Activated B cell treated with CpG ODN at 0.5 μM for 24 hours (primary cell): ENCODE measurements at regions of chr1 and their contacts with region 1.

Region 1: DNA sequence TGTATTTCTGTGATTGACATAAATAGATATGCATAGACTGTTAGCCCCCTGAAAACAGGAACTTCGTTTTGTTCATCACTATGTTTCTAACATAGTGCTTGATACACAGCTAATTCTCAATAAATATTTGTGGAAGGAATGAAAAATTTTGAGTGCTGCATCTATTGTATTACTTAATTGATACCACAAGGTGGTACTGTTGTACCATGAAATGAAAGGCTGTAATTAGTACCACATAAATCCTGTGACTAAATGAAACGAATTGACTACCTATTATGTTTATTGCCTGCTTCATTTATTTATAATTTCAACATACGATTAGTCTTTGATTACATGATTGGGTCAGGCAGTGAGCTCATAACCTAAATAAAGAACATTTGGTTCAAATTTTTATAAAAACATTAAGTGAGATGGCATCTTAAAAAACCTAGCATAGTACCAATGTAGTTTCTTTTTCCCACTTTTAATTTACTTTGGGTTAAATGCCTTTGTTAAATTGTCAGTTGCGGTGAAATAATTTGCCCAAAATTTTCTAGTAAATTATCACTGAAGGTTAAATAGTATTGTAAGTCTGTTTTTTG is 15.0 kb upstream of the TGFB2 start:
- DNase-seq: no peak
- ATAC-seq: peak; percentile 70
- H3K4me3 Mint-ChIP-seq: no peak overlapping the region
- H3K27ac Mint-ChIP-seq: no peak overlapping the region
- H3K4me1 Mint-ChIP-seq: no peaks in the 10 kb centered on the region
- H3K27me3 Mint-ChIP-seq: no peaks in the 10 kb centered on the region
- CTCF ChIP-seq: peak; percentile 65

Region 2: DNA sequence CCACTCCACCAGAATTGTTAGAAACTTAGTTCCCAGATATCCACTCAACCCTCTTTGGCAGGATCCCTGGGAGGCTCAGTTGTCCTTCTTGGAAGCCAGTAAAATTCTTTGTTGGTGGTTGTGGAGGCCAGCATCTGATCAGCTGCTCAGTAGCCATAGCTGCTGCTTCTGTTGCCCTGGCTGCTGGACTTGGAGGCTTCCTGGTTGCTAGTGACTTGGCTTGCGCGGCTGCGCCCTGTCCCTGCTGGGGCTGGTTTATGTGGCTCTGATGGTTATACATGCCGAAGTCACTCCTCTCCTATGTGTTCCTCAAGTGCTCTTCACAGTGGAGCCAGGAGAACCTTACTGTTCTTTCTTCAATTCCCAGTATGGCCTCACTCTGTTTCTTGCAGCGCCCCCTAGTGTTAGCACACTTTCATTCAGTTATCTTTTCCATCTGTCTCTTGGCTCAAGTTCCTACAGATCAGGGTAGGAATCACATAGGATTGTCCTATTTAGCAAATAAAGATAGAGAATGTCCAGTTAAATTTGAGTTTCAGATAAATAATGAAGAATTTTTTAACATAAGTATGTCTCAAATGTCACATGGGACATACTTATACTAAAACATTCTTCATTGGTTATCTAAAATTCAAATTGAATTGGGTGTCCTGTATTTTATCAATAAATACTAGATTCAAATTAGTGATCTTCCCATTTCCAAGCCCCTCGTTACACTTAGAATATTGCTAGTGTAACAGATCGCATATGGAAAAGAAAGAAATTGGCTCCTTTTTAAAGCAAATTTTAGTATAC is 191.4 kb after region 1 on chr1:
- CTCF ChIA-PET with region 1: no interaction called
- POLR2A ChIA-PET with region 1: no interaction called
- intact Hi-C with region 1: loop called (anchors 1 kb)
- DNase-seq: no peak
- ATAC-seq: no peak
- H3K4me3 Mint-ChIP-seq: no peak overlapping the region
- H3K27ac Mint-ChIP-seq: no peak overlapping the region
- H3K4me1 Mint-ChIP-seq: no peaks in the 10 kb centered on the region
- H3K27me3 Mint-ChIP-seq: peaks cover 8% of the 10 kb centered on the region
- CTCF ChIP-seq: no peak

Region 3: DNA sequence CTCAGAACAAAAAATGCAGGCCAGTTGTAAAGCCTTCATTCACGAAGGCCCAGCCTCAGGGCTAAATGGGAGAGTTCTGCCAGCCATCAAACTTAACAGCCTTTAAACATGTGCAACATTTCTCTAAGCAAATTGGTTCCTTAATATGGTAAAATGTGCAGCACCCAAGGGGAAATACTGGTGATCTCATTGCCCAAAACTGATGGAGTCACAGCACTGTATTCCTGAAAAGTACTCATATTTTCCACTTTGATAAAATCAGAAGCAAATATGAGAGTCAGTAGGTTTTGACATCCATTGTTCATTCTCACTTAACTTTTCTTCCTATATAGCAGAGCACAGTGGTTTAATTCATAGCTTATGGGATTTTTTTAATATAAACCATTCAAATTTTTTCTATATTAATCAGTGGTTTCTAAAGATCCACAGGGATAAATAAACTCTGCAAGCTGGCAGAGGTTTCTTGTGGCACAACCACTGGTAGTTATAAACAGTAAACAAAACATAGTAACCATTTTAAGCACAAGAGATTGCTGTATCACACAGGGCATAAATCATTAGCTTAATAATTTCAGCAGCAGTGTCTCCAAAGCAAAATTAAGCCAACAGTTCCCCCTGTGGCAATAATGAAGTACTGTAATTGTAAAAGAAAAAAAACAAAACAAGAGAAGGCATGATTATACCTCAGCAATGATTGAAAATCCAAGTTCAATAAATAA is 736.7 kb after region 1 on chr1:
- CTCF ChIA-PET with region 1: no interaction called
- POLR2A ChIA-PET with region 1: no interaction called
- intact Hi-C with region 1: loop called (anchors 2 kb)
- DNase-seq: no peak
- ATAC-seq: no peak
- H3K4me3 Mint-ChIP-seq: no peak overlapping the region
- H3K27ac Mint-ChIP-seq: no peak overlapping the region
- H3K4me1 Mint-ChIP-seq: peaks cover 8% of the 10 kb centered on the region
- H3K27me3 Mint-ChIP-seq: no peaks in the 10 kb centered on the region
- CTCF ChIP-seq: no peak

Region 4: DNA sequence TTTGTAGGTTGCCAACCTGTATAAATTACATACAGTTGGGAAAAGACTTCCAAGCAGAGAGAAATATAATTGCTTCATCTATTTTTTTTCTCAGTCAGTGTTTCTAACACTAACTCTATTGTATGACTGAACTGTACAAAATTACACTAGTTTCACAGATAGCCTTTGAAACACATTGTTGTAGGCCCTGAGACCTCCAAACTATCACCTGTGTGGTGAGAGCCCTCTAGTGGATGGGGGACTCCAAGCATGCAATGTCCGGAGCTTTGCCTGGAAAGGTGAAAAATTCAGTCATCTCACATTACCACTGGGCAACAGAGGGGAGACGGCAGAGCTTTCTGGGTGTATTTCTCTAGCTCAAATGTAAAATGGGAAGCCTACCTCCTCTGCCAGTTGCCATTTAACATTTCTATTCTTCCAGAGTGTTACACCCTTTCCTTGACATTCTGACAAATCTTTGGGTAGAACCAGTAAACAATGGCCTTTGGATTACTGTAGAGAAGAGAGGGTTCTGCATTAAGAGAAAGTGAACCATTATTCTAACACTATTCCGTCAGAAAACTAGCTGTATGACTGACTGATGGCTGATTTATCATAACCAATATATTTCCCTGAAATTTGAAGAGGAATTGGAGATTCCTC is 1055.8 kb after region 1 on chr1:
- CTCF ChIA-PET with region 1: interaction called, 15 read pairs
- POLR2A ChIA-PET with region 1: no interaction called
- intact Hi-C with region 1: loop called (anchors 1 kb)
- DNase-seq: no peak
- ATAC-seq: peak; percentile 52
- H3K4me3 Mint-ChIP-seq: no peak overlapping the region
- H3K27ac Mint-ChIP-seq: no peak overlapping the region
- H3K4me1 Mint-ChIP-seq: no peaks in the 10 kb centered on the region
- H3K27me3 Mint-ChIP-seq: no peaks in the 10 kb centered on the region
- CTCF ChIP-seq: no peak

Region 5: DNA sequence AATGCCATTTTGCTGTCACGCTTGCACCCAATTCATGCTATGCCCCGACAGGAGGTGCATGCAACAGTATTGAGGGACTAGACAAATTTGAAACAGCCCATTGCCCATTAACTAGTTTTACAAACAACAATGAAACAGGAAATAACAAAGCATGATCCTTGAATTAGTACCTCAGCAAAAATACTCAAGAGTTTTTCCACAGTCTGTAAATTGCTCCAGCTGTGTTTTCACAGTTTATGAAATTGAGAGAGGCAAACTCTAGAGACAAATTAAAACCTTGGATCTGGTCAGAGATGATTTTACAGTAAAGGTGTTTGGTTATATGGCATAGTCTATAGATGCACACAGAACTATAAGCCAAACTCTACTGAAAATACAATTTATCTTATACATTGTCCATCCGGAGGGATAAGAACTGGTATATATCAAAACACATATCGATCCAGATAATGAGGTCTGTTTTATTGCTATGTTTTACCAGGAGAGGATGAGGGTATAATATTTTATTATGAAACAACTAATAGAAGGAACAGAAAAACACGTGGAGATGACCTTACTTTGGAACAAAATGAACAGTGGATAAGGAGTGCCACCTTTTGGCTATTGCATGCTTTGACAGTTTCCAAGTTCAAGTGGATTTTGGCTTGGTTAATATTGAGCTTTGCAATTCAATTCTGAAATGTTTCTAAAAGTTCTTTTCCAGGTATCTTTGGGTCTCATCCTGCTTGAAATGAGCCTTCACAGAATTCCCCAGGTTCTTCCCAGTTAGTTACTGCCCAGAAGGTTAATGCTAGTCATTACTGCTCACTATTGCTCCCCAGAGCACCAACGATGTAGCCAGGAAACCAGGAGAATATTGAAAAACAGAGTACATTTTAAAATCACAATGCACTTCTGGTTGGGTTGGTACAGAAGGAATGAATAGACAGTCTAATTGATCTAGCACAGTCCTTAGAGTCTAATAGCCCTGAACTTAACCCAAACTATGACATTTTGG is 1237.1 kb after region 1 on chr1:
- CTCF ChIA-PET with region 1: no interaction called
- POLR2A ChIA-PET with region 1: no interaction called
- intact Hi-C with region 1: loop called (anchors 5 kb)
- DNase-seq: no peak
- ATAC-seq: no peak
- H3K4me3 Mint-ChIP-seq: no peak overlapping the region
- H3K27ac Mint-ChIP-seq: no peak overlapping the region
- H3K4me1 Mint-ChIP-seq: no peaks in the 10 kb centered on the region
- H3K27me3 Mint-ChIP-seq: no peaks in the 10 kb centered on the region
- CTCF ChIP-seq: no peak